BJ (cell line): ENCODE measurements at regions of chr10 and their contacts with region 1.

Region 1: DNA sequence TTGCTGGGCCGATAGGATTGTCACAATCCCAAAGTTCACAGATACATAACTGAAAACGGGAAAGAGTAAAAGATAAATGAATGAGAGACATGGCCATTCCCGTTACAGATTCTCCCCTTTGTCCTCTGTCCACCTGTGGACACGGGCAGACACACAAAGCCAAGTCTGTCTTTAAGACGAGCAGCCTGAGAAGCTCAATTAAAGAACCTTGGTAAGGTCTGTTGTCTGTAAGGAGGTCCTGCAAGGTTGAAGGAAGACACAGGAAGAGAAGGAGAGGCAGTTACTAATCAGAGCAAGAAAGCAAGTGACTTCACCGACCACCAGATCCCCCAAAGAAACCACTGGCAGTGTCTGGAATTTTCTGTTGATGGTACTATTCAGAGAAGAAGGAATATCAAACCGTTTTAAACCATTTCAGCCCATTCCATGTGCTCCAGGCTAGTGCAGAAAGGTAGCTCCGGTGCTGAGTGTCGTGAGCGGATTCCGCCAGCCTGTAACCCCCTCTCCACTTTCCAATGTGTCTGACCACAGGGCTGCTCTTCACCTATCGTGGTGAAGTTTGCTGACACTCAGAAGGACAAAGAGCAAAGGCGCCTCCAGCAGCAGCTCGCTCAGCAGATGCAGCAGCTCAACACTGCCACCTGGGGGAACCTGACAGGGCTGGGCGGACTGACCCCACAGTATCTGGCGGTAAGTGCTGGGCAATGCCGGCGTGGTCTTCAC is 252.6 kb downstream of the CELF2 start:
- DNase-seq: no peak
- H3K4me3 ChIP-seq: no peak overlapping the region
- H3K27me3 ChIP-seq: no peaks in the 10 kb centered on the region
- CTCF ChIP-seq: peak; percentile 86

Region 2: DNA sequence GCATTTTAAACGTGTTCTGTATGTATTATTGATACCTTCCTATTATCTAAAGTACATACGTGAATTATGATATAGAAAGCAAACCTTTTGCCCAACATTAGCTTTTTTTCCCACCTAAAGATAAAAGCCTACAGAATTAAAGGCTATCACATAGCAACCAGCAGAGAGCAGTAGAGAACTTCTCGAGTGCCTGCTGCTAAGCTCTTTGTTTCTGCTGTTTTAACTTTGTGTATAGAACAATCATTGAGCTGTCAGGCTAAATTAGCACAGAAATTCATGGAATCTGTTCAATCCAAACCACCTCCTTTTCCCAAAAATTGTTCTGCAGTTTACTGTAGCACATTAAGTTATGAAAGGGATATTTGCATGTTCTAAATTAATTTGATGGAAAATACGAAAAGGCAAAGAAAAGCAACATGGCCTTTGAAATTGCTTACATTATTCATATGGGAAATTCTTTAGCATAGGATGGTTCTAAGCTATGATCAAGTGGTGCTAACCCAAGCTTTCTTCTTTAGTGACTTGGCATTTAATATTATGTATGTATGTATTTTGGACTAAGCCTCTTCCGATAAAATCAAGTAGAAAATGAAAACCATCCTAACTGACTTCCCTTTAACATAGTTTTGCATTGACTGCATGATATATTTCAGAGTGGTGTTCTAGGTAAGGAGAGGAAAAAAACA is 1927.3 kb before region 1 on chr10:
- CTCF ChIA-PET with region 1: interaction called, 11 read pairs
- POLR2A ChIA-PET with region 1: no interaction called
- DNase-seq: no peak
- H3K4me3 ChIP-seq: no peak overlapping the region
- H3K27me3 ChIP-seq: no peaks in the 10 kb centered on the region
- CTCF ChIP-seq: peak; percentile 74

Region 3: GRCh38 chr10:11120711-11121110 is 149.6 kb before region 1 on chr10:
- CTCF ChIA-PET with region 1: no interaction called
- POLR2A ChIA-PET with region 1: no interaction called
- DNase-seq: no peak
- H3K4me3 ChIP-seq: no peak overlapping the region
- H3K27me3 ChIP-seq: no peaks in the 10 kb centered on the region
- CTCF ChIP-seq: no peak

Region 4: DNA sequence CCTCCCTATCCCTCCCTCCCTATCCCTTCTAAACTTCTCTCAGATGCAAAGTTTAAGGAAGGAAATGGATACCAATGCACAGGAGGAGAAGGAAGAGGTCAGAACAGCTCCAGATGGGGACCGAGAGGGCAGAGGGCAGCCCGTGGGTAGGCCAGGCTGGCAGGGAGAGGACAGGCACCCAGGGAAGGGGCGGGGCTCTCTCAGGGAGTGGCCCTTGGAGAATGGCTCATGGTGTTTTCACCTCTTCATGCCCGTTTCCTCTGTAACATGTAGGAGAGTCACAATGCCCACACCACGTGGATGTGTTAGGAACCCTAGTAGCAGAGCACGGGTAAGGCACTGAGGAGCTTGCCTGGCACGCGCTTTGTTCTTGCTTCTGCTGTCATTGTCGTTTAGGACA is 11.9 kb after region 1 on chr10:
- CTCF ChIA-PET with region 1: interaction called, 10 read pairs
- POLR2A ChIA-PET with region 1: no interaction called
- DNase-seq: no peak
- H3K4me3 ChIP-seq: no peak overlapping the region
- H3K27me3 ChIP-seq: no peaks in the 10 kb centered on the region
- CTCF ChIP-seq: no peak